ENCODE measurements at regions of chr11 and their contacts with region 1.

Region 1: GRCh38 chr11:117807482-117808327 is 10.7 kb upstream of the DSCAML1 start:
- DNase-seq: no peak
- H3K4me3 ChIP-seq: no peak overlapping the region
- H3K27me3 ChIP-seq: peaks cover 2% of the 10 kb centered on the region
- CTCF ChIP-seq: peak; percentile 89

Region 2: GRCh38 chr11:117375960-117376359 is 431.7 kb before region 1 on chr11:
- CTCF ChIA-PET with region 1: no interaction called
- POLR2A ChIA-PET with region 1: interaction called, 16 read pairs
- DNase-seq: no peak
- H3K4me3 ChIP-seq: no peak overlapping the region
- H3K27me3 ChIP-seq: no peaks in the 10 kb centered on the region
- CTCF ChIP-seq: no peak

Region 3: DNA sequence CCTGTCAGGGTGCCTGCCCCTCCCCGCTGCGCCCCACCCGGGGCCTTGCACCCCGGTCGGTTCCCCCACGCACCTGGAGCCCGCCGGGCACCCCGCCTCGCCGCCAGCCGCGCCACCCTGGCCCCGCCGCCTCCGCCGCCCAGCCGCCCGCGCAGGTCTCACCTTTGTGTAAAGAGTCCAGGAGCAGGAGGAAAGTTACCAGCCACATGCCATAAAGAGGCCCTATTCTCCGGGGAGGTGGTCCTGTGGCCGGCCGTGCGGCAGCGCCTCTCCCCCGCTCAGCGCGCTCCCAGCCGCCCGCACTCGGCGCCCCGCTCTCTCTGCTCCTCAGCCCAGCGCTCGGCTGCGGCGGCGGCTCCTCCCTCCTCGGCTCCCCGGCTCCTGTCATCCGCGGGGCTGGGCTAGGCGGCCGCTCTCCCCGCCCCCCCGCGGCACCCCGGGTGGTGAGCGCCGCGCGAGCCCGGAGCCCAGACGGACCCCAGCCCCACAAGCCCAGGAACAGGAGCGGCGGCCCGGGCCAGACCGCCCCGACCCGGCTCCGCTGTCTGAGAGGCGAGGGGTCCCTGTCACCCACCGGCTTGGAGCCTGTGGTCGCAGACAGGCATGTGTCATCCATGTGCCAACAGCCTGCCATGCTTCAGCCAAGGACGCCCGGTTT is 10.7 kb before region 1 on chr11 and contains the start of gene DSCAML1:
- CTCF ChIA-PET with region 1: interaction called, 36 read pairs
- POLR2A ChIA-PET with region 1: no interaction called
- DNase-seq: no peak
- H3K4me3 ChIP-seq: no peak within 1 kb of the TSS
- H3K27me3 ChIP-seq: peaks cover 21% of the 10 kb centered on the region
- CTCF ChIP-seq: no peak
- polyA plus RNA-seq, gene DSCAML1: not detected in 2 replicates

Region 4: DNA sequence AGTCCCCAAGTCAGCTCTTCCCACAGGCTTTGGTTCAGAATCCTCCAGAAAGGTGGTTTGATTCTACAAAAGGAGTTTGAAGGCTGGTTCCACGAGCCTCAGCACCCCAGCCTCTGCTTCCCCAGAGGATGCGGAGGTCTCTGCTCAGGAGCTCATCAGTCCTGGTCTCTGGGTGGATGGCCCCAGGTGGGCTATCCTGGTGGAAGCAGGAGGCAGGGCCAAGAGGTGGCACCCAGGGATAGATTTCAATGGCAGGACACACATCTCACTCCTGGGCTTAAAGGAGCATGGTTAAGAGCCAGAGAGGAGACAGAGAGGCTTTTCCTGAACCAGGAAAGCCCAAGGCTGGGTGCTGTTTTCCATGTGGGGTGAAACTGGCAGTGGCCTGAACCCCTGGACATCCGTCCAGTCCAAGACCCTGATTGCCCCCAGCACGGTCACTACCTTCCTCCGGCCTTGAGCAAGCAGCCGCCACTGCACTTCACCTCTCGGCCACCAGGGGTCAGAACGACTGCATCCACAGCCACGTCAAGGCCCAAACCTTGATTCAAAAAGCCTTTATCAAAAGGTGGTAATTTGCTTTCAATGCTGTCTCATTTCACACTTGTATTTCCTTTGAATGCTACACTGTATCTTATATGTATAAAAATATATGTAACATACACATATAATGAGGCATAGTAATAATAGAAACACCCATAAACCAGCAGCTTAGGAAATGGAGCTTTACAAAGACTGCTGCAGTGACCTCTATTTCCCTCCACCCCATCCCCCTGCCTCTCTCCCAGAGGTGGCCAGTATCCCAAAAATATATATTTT is 36.2 kb after region 1 on chr11:
- CTCF ChIA-PET with region 1: interaction called, 18 read pairs
- POLR2A ChIA-PET with region 1: no interaction called
- DNase-seq: no peak
- H3K4me3 ChIP-seq: no peak overlapping the region
- H3K27me3 ChIP-seq: peaks cover 2% of the 10 kb centered on the region; the same call in 1 of the 2 replicates
- CTCF ChIP-seq: peak; percentile 95

Region 5: DNA sequence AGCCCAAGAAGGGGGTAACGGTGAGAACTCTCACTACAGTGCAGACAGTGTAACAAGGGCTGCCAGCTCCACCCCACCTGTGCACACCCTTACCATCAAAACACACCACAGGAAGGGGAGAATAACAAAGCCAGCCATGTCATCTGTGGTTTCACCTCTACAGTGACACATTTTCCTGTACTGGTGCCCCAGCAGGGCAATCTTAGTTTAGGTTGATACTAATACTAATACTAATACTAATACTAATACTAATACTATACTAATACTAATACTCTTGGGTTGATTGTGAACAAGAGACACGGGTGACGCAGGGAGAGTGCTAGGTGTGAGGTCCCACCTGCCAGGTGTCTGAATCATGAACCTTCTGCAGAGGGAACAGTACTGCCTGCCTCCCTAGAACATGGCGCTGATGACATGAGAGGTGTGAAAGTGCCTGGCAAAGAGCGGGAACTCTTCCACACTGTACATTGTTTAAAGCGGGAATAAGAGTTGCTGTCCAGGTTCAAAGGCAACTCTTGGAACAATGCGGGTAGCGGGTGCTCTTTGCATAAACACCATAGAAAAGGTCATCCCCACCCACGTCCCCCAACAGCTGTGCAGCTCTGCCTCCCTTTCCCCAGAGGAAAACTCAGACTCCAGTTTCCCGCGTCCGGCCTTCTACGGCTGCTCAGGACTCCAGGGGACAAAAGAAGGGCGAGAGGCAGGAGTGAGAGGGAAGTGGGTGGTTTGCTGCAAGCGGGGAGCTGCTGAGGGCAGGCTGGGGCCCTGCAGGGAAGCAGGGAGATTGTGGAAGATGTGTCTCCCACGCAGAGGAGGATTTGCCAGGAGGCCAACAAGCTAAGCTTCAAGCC is 244.1 kb after region 1 on chr11:
- CTCF ChIA-PET with region 1: interaction called, 34 read pairs
- POLR2A ChIA-PET with region 1: no interaction called
- DNase-seq: no peak
- H3K4me3 ChIP-seq: no peak overlapping the region
- H3K27me3 ChIP-seq: peaks cover 2% of the 10 kb centered on the region
- CTCF ChIP-seq: no peak